Cardiac septum (tissue), 1 donor: ENCODE measurements at regions of chr1 and their contacts with region 1.

Region 1: GRCh38 chr1:57084701-57085100 is 118.9 kb upstream of the C8B start:
- DNase-seq: no peak

Region 2: GRCh38 chr1:57115030-57115614 is 30.4 kb after region 1 on chr1:
- intact Hi-C with region 1: loop called (anchors 2 kb)
- DNase-seq: no peak

Region 3: GRCh38 chr1:57881639-57882038 is 796.9 kb after region 1 on chr1:
- intact Hi-C with region 1: no loop called
- DNase-seq: no peak